AG04449 (cell line): ENCODE measurements at regions of chr3 and their contacts with region 1.

Region 1: DNA sequence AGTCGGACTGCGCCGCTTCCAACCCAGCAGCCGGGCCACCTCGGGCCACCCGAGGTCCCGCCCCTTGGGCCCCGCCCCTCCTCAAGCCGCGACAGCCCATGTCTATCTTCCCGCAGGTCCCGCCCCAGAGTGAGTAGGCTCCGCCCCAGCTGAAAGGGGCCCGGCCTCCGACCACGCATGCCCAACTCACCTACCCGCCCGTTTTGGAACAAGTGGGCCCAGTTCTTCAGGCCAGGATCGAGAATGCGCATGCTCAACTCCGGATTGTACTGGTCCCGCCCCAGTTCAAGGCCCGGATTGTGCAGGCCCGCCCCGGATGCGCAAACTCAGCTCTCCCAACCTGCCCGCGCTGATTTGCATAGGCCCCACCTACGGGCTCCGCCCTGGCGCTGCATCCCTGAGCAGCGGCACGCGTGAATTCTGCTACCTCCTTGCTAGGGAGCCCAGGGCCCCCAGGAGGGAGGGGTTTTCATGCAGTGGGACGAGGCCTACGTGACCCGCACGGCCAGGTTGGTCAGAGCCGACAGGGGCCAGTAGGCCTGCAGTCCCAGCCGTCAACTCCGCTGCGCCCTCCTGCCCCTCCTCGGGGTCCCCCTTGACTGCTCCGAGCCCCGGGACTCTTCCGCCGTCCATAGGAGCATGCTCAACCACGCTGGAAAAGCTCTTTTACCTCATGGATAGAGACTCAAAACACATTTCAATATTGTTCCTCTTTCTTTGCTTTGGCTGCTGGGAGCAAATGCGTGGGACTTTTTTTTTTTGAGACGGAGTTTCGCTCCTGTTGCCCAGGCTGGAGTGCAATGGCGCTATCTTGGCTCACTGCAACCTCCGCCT is at the start of gene PFKFB4:
- DNase-seq: peak; percentile 93
- H3K4me3 ChIP-seq: peak within 1 kb of the TSS; percentile 86
- CTCF ChIP-seq: peak; percentile 1

Region 2: DNA sequence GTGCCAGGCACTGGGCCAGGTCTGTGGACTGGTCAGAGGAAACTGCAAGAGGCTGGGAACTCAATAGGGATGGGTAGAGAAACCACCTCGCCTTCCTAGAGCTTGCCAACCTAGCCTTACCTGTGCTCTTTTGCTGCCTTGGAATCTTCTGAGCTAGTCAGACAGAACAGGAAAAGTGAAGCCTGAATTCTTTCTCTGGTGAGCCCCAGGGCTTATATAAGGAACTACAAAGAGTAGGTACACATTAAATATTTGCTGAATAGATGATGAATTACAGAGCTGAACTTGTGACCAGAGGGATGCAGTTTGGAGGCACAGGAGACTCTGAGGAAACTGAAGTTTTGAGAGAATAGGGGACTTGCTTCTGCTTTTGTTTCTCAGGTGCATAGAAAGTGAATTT is 200.6 kb before region 1 on chr3:
- CTCF ChIA-PET with region 1: no interaction called
- POLR2A ChIA-PET with region 1: no interaction called
- DNase-seq: no peak
- H3K4me3 ChIP-seq: no peak overlapping the region
- CTCF ChIP-seq: no peak

Region 3: DNA sequence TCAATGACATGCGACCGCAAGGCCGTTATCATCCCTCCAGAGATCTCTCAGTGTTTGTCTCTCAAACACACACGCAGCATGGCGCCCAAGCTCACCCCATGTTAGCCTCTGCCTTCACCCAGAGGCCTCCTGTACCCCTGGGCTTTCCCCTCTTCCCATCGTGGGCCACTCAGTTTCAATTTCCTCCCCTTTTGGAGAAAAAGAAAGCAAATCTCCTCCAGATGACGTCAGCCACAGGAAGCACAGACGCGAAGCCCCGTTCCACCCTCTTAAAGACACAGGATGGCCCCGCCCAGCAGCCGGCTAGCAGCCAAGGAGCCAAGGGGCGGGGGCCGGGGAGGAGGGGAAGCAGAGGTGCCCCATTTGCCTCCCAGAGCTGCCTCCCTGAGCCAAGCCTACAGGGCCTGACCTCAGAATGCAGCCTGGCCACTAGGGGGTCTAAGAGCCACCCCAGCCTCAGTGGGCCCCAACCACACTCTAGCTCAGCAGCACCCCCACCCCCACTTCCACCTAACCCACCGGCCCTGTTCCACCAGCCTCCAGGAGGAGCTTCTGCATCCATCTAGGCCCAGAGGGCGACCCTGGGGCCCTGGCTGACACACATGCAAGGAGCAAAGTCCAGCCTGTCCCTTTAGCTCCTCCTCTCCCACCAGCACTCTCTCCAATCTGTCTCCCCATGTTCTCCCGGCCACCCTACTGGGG is 83.9 kb before region 1 on chr3:
- CTCF ChIA-PET with region 1: interaction called, 10 read pairs
- POLR2A ChIA-PET with region 1: no interaction called
- DNase-seq: peak; percentile 45
- H3K4me3 ChIP-seq: peak overlapping the region; percentile 85
- CTCF ChIP-seq: peak; percentile 46

Region 4: DNA sequence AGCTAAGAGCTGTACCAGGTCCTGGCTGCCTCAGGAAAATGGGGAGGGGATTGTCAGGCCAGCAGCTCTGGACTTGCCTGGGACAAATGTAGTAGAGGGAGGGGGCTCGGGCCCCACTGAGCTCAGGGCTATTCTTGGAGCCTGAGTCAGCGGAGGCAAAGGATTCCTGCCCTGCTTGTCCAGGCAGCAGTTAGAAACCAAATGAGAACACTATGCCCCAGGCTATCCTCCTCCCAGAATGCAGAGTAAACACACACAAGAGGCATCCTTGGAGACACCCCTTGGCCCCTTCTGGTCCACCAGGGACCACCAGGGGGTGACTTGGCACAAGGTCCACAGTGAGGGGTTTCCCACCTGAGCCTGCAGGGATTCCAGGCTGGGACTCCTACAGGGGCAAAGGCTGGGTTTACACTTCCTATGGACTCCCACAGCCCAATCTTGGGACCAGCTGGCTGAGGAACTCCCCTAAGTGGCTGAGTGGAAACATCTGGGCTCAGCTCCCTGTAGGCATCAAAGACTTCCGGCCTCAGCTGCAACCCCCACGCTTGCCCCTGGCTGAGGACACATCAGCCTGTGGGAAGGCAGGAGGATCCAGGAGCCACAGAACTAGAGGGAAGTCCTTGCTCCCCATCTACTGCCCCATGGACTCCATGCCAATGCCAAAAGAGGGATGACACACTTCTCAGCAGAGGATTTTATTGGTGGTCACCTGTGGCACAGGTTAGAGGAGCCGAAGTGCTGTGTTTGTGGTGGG is 41.5 kb after region 1 on chr3:
- CTCF ChIA-PET with region 1: interaction called, 25 read pairs
- POLR2A ChIA-PET with region 1: interaction called, 3 read pairs
- DNase-seq: peak; percentile 82
- H3K4me3 ChIP-seq: peak overlapping the region; percentile 23
- CTCF ChIP-seq: no peak

Region 5: GRCh38 chr3:48716982-48717746 is 160.2 kb after region 1 on chr3 and contains the start of gene IP6K2:
- CTCF ChIA-PET with region 1: no interaction called
- POLR2A ChIA-PET with region 1: no interaction called
- DNase-seq: peak; percentile 76
- H3K4me3 ChIP-seq: peak within 1 kb of the TSS; percentile 94
- CTCF ChIP-seq: no peak